ENCODE measurements at regions of chr18 and their contacts with region 1.

Region 1: GRCh38 chr18:61893971-61894750 is 1.4 kb upstream of the RNF152 start:
- DNase-seq: peak; percentile 91
- H3K4me3 ChIP-seq: peak overlapping the region; percentile 85 to 95
- H3K27ac ChIP-seq: peak overlapping the region; percentile 81 to 85
- H3K4me1 ChIP-seq: no peaks in the 10 kb centered on the region
- H3K27me3 ChIP-seq: no peaks in the 10 kb centered on the region
- CTCF ChIP-seq: peak in 3 of 4 experiments; percentile 8 to 74 (median 71)
- POLR2A ChIP-seq: peak; percentile 77

Region 2: DNA sequence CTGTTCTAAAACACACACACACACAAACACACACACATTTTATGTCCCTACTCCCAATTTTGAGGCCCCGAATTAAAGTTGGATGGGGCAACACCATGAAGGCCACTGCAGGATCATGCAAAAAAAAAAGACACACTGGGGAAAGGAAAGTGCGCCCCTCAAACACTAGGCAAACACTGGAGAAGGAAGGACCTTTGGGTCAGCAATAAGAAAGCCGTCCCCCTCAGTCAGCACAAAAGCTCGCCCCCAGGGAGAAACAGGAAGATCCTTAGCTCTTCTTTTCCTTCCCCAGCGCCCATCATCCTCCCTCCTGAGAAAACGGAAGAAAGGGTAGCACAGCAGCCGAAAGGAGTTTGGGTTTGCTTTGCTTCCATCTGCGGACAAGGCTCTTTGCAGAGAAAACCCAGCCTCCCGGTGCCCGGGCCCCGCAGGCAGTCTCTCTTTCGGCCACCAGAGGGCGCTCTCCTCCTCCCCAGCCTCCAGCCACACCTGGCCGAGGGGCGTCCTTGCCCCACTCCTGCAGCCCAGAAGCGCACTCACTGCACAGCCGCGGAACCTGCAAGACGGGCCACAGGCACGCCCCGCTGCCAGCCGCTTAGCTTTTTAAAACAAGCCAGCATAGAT is 312.5 kb before region 1 on chr18:
- intact Hi-C with region 1: loop called (anchors 10 kb)
- DNase-seq: peak; percentile 77
- H3K4me3 ChIP-seq: peak overlapping the region; percentile 23 to 25
- H3K27ac ChIP-seq: peak overlapping the region; percentile 48 to 50
- H3K4me1 ChIP-seq: no peaks in the 10 kb centered on the region
- H3K27me3 ChIP-seq: no peaks in the 10 kb centered on the region
- CTCF ChIP-seq: peak; percentile 95 to 99 (median 97)
- POLR2A ChIP-seq: no peak

Region 3: DNA sequence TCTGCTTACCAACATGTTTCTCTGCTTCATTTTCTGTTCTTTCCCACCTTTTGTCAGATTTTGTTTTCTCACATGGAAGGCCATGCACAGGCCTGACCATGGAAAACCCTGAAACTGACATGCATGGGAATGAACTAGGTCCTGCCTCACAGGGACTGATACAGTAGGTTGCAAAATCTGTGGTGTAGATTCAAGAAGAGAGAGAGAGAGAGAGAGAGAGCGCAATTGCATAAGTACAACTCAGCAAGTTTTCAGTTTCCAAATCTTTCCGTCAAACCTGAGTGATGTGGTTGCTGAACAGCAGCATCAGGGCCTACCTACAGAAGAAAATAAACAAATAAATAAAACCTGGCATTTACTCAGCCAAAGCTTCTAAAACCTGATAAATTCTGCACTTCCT is 86.2 kb after region 1 on chr18:
- intact Hi-C with region 1: no loop called
- DNase-seq: no peak
- H3K4me3 ChIP-seq: no peak overlapping the region
- H3K27ac ChIP-seq: no peak overlapping the region
- H3K4me1 ChIP-seq: no peaks in the 10 kb centered on the region
- H3K27me3 ChIP-seq: no peaks in the 10 kb centered on the region
- CTCF ChIP-seq: no peak
- POLR2A ChIP-seq: no peak